ENCODE measurements at regions of chr5 and their contacts with region 1.

Region 1: GRCh38 chr5:31935702-31936369 is 238.3 kb downstream of the GOLPH3 start:
- DNase-seq: peak; percentile 90
- H3K4me3 Mint-ChIP-seq: peak overlapping the region; percentile 90
- H3K27ac Mint-ChIP-seq: peak overlapping the region; percentile 87
- H3K4me1 Mint-ChIP-seq: peaks cover 35% of the 10 kb centered on the region
- H3K27me3 Mint-ChIP-seq: no peaks in the 10 kb centered on the region
- CTCF ChIP-seq: no peak

Region 2: DNA sequence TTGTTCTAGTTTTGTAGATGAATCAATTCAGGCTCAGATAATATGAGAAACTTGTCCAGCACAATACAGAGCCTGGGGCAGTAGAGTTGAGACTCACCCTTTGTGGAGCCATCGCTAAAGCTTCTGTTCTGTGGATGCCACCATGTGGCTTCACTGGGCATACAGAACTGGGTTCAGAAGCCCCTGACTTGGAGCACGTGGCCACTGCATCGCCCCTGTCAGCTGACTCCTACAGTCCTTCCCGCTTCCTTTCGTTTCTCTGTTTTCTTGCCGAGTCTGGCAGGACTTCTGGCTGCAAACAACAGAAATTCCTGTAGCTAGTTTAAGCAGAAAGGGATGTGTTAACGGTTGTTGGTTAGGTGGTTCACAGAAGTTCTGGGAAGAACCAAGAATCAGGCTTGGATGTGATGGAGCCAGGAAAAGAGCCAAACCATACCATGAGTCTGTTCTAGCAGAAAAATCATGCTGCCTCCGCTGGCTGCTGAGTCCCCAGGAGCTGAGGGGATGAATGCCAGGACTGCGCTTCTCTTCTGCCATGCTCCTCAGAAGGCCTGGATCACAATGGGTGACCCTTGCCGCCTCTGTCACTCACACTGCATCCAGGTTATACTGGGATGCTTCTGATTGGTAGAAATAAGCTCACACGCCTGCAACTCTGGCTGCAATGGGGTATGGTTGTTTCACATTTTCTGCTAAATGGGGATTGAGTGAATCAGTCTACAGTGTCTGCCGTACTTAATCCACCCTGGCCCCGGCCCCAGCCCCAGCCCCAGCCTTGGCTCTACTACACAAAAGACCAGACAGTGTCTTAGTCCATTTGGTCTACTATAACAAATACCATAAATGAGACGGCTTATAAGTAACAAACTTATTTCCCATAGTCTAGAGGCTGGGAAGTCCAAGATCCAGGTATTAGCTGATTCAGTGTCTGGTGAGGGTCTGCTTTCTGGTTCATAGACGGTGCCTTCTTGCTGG is 24.3 kb before region 1 on chr5:
- CTCF ChIA-PET with region 1: interaction called, 3 read pairs
- POLR2A ChIA-PET with region 1: interaction called, 94 read pairs
- intact Hi-C with region 1: no loop called
- DNase-seq: no peak
- H3K4me3 Mint-ChIP-seq: no peak overlapping the region
- H3K27ac Mint-ChIP-seq: no peak overlapping the region
- H3K4me1 Mint-ChIP-seq: peaks cover 30% of the 10 kb centered on the region
- H3K27me3 Mint-ChIP-seq: no peaks in the 10 kb centered on the region
- CTCF ChIP-seq: no peak

Region 3: DNA sequence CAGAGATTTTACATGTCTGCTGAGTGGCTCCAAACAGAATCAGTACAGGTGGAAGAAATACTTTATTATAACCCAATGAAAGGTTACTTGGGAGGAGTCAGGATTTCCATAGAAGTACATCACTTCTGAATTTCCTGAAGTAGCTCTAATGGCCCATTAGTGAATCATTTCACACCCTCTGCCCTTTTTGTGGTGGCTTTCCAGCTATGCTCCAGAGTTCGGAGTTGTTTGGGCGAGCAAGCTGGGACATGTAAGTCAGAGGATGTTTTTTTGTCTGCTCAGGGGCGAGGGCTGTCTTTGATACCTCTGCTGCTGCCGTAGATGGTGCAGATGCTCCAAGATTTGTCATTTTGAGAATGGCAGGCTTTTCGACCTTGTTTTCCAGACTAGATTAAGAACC is 12.2 kb after region 1 on chr5:
- CTCF ChIA-PET with region 1: interaction called, 12 read pairs
- POLR2A ChIA-PET with region 1: interaction called, 84 read pairs
- intact Hi-C with region 1: no loop called
- DNase-seq: peak; percentile 83
- H3K4me3 Mint-ChIP-seq: peak overlapping the region; percentile 38
- H3K27ac Mint-ChIP-seq: peak overlapping the region; percentile 91
- H3K4me1 Mint-ChIP-seq: peaks cover 20% of the 10 kb centered on the region
- H3K27me3 Mint-ChIP-seq: no peaks in the 10 kb centered on the region
- CTCF ChIP-seq: no peak

Region 4: DNA sequence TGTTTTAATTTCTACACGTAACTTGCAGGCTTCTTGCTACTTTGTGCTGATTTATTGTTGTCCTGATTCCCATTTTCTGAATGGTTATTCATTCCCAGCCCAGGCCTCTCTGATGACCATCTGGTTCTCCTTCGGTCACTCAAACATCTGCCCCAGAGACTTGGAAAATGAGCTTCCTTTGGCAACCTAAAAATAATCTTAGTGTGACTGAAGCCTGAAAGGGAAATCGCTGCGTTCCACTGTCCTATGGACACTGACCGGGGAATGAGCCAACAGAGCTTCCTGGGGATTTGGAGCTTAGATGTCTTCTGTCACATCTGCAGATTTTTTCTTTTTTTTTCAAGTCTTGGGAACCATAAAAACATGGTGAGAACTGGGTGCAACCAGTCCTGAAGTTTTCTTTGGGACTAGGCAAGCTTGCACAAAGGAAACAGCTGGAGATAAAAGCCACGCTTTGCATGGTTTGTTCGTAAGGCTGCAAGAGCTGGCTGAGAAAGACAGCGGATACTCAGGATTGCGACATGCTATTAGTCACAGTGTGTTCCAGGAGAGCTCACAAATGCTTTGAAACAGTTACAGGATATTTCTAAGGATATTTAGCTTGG is 92.0 kb after region 1 on chr5:
- CTCF ChIA-PET with region 1: no interaction called
- POLR2A ChIA-PET with region 1: interaction called, 21 read pairs
- intact Hi-C with region 1: loop called (anchors 1 kb)
- DNase-seq: peak; percentile 98
- H3K4me3 Mint-ChIP-seq: peak overlapping the region; percentile 38
- H3K27ac Mint-ChIP-seq: peak overlapping the region; percentile 86
- H3K4me1 Mint-ChIP-seq: peaks cover 54% of the 10 kb centered on the region
- H3K27me3 Mint-ChIP-seq: no peaks in the 10 kb centered on the region
- CTCF ChIP-seq: no peak

Region 5: DNA sequence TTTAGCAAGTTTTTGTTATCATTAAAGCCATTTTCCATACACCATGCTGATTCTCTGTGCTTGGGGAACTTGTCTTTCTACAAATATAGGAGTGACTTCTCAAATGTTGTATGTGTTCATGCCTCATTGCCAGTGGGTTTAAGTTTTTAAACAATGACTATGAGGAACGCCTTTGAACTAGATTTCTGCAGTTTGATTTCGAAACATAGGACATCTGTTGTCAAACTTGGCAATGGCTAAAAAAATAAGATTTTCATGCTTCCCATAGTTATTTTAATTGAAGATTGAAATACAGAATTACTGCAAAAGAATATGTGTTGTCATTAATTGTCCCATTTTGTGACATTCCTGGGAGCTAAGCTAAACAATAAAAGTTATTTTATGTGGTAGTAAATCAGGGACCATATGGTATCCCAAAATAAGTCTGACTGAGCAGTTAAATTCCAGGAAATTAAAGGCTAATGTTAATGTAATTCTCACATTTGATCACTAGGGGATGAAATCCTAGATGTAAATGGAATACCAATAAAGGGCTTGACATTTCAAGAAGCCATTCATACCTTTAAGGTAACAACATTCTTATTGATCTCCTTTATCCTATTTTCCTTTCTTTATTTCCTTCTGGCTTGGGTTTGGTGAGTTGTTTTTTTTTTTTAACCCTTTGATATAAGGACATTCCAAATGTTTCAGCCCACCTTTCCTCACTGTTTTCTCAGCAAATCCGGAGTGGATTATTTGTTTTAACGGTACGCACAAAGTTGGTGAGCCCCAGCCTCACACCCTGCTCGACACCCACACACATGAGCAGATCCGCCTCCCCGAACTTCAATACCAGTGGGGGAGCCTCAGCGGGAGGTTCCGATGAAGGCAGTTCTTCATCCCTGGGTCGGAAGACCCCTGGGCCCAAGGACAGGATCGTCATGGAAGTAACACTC is 121.6 kb after region 1 on chr5:
- CTCF ChIA-PET with region 1: no interaction called
- POLR2A ChIA-PET with region 1: interaction called, 11 read pairs
- intact Hi-C with region 1: loop called (anchors 5 kb)
- DNase-seq: peak; percentile 53
- H3K4me3 Mint-ChIP-seq: no peak overlapping the region
- H3K27ac Mint-ChIP-seq: peak overlapping the region; percentile 88
- H3K4me1 Mint-ChIP-seq: peaks cover 28% of the 10 kb centered on the region
- H3K27me3 Mint-ChIP-seq: no peaks in the 10 kb centered on the region
- CTCF ChIP-seq: peak; percentile 31

Measured in MCF 10A (cell line).